Activated CD8-positive, alpha-beta T cell treated with anti-CD3 and anti-CD28 coated beads for 36 hours (primary cell): ENCODE measurements at regions of chr1 and their contacts with region 1.

Region 1: GRCh38 chr1:23634842-23635651 is 56.6 kb upstream of the RPL11 start:
- DNase-seq: peak; percentile 66
- ATAC-seq: peak; percentile 90
- H3K4me3 Mint-ChIP-seq: peak overlapping the region; percentile 51
- H3K27ac Mint-ChIP-seq: peak overlapping the region; percentile 85
- H3K4me1 Mint-ChIP-seq: peaks cover 28% of the 10 kb centered on the region
- H3K27me3 Mint-ChIP-seq: no peaks in the 10 kb centered on the region
- CTCF ChIP-seq: peak; percentile 84

Region 2: DNA sequence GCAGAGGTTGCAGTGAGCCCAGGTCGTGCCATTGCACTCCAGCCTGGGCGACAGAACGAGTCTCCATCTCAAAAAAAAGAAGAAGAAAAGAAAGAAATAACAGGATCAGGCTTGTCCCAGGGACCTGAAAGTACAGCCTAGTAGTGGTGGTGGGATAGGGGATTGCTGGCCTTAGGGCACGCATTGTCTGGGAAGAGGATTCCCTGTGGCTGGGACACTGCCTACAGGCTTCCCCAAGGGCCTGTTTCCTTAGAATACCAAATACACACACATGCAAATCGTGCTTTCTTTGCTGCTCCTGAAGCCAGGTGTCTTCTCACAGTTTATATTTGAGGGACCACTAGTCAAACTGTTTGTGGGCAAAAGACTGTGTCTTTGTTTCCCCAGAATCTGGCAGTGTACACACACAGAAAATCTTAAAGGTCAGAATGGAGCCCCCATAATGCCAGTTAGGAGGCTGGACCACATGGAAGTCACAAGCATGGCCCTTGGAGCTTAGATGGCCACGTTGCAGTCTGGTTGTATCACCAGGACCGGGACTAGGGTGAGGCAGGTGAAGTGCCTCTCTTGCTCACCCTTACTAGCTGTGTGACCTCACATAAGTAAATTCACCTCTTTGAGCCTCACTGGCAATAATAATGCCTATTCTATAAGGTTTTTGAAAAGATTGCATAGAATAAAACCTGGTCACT is 138.4 kb before region 1 on chr1:
- CTCF ChIA-PET with region 1: interaction called, 51 read pairs
- POLR2A ChIA-PET with region 1: no interaction called
- intact Hi-C with region 1: loop called (anchors 5 kb)
- DNase-seq: no peak
- ATAC-seq: peak; percentile 13
- H3K4me3 Mint-ChIP-seq: no peak overlapping the region
- H3K27ac Mint-ChIP-seq: no peak overlapping the region
- H3K4me1 Mint-ChIP-seq: no peaks in the 10 kb centered on the region
- H3K27me3 Mint-ChIP-seq: no peaks in the 10 kb centered on the region
- CTCF ChIP-seq: no peak

Region 3: GRCh38 chr1:23539698-23540266 is 95.3 kb before region 1 on chr1:
- CTCF ChIA-PET with region 1: interaction called, 927 read pairs
- POLR2A ChIA-PET with region 1: interaction called, 21 read pairs
- intact Hi-C with region 1: loop called (anchors 1 kb)
- DNase-seq: peak; percentile 98
- ATAC-seq: peak; percentile 97
- H3K4me3 Mint-ChIP-seq: peak overlapping the region; percentile 45
- H3K27ac Mint-ChIP-seq: peak overlapping the region; percentile 74
- H3K4me1 Mint-ChIP-seq: peaks cover 9% of the 10 kb centered on the region
- H3K27me3 Mint-ChIP-seq: no peaks in the 10 kb centered on the region
- CTCF ChIP-seq: peak; percentile 76

Region 4: DNA sequence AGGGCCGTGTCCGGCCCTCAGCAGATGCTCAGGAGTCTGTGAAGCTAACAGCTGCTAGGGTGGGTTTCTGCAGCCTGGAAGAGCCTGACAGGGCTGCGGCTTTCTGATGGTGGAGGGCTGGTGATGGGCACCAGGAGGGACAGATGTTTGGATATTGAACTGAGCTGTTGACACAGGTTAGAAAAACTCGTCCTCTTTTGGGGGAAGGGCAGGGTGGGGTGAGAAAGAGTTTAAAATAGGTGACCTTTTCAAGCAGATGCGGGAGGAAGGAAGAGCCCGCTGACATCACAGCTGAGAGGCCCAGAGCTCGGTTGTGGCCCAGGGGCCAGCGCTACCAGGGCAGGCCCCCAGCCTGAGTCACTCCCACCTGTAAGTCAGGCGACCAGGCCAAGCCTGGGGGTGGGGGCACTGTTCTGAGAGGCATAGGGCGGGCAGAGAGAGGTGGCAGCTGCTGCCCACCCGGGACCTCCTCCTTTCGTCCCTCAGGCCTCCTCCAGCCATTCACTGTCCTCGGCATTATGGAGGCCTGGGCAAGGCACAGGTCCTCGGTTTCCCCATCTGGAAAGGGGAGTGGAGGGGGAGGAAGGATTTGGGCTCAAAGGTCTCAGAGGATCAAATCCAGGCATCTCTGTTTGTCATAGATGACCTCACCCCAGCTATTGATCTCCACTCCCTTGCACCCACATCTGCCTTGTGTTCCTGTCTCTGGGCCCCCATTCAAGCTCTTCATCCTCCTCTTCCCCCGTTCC is 43.4 kb before region 1 on chr1:
- CTCF ChIA-PET with region 1: interaction called, 166 read pairs
- POLR2A ChIA-PET with region 1: interaction called, 3 read pairs
- intact Hi-C with region 1: no loop called
- DNase-seq: peak; percentile 96
- ATAC-seq: peak; percentile 87
- H3K4me3 Mint-ChIP-seq: peak overlapping the region; percentile 21
- H3K27ac Mint-ChIP-seq: peak overlapping the region; percentile 90
- H3K4me1 Mint-ChIP-seq: peaks cover 79% of the 10 kb centered on the region
- H3K27me3 Mint-ChIP-seq: no peaks in the 10 kb centered on the region
- CTCF ChIP-seq: no peak

Region 5: DNA sequence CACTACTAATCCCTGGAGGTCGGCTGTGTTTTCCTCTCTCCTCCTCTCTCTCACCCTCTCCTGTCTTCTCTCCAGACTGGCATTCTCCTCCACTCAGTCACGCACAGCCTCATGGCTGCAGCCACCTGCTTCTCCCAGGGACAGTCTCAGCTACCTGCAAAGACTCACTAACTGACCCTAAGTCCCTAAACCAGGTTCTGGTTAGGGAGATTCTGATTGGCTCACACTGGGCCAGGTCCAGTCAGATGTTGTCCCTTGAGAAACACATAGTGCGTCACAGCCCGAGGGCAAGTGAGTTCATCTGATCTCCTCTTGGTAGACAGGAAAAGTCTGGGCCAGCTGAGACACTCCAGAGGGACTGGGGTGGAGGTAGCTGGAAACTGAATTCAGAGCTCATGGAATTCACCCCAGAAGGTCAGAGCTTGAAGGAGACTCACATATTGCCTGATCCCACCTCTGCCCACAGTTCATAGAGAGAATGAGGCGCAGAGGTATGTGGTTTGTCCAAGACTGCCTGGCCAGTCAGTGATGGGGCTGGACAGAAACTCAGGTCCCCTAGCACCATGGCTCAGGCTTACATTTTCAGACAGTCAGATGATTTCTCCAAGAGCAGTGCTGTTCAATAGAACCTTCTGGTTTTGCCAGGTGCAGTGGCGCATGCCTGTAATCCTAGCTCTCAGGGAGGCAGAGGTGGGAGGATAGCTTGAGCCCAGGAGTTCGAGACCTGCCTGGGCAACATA is 16.2 kb after region 1 on chr1:
- CTCF ChIA-PET with region 1: interaction called, 31 read pairs
- POLR2A ChIA-PET with region 1: interaction called, 3 read pairs
- intact Hi-C with region 1: no loop called
- DNase-seq: no peak
- ATAC-seq: no peak
- H3K4me3 Mint-ChIP-seq: no peak overlapping the region
- H3K27ac Mint-ChIP-seq: no peak overlapping the region
- H3K4me1 Mint-ChIP-seq: no peaks in the 10 kb centered on the region
- H3K27me3 Mint-ChIP-seq: no peaks in the 10 kb centered on the region
- CTCF ChIP-seq: no peak

Region 6: DNA sequence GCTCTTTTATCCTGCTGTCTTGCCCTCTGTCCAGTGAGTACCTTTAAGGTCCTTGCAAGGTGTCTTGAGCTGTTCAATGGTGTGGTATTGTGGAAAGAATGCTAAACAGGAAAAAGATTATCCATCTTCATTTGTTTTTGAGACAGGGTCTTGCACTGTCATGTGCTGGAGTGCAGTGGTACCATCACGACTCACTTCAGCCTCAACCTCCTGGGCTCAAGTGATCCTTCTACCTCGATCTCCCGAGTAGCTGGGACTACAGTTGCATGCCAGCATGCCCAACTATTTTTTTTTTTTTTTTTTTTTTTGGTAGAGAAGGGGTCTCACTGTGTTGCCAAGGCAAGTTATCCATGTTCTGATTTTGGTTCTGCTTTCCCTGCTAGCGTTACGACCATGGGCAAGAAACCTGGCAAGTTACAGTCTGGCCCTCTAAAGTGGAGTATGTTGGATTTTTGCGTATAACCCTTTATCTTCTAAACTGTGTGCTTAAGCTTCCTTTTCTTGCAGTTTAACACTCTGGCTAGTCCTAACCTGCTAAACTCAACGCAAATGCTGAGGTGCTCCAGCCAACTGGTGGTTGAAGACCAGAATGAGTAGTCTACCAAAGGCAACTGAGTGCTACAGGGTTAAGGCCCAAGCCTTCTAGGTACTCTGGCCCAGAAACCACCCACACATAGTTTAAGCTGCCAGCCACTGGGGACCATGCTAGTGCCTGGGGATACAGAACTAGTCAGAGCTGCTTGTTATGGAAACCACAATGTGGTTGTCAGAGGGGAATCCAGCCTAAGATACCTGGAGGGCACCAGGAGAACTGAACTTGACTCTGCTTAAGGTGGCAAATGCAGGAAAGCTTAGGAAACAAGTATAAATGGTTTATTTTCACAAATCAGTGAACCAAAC is 64.5 kb after region 1 on chr1:
- CTCF ChIA-PET with region 1: interaction called, 10 read pairs
- POLR2A ChIA-PET with region 1: no interaction called
- intact Hi-C with region 1: no loop called
- DNase-seq: peak; percentile 57
- ATAC-seq: peak; percentile 78
- H3K4me3 Mint-ChIP-seq: no peak overlapping the region
- H3K27ac Mint-ChIP-seq: peak overlapping the region; percentile 71
- H3K4me1 Mint-ChIP-seq: peaks cover 56% of the 10 kb centered on the region
- H3K27me3 Mint-ChIP-seq: no peaks in the 10 kb centered on the region
- CTCF ChIP-seq: no peak

Region 7: GRCh38 chr1:23867953-23868556 is 233.0 kb after region 1 on chr1 and contains the start of gene FUCA1:
- CTCF ChIA-PET with region 1: no interaction called
- POLR2A ChIA-PET with region 1: no interaction called
- intact Hi-C with region 1: no loop called
- DNase-seq: peak; percentile 96
- ATAC-seq: peak; percentile 98
- H3K4me3 Mint-ChIP-seq: peak within 1 kb of the TSS; percentile 76
- H3K27ac Mint-ChIP-seq: peak within 1 kb of the TSS; percentile 53
- H3K4me1 Mint-ChIP-seq: peaks cover 18% of the 10 kb centered on the region
- H3K27me3 Mint-ChIP-seq: no peaks in the 10 kb centered on the region
- CTCF ChIP-seq: peak; percentile 87
- total RNA-seq, gene FUCA1: 4.6 to 4.8 TPM